Heart left ventricle (tissue), 16 donors: ENCODE measurements at regions of chr7 and their contacts with region 1.

Region 1: GRCh38 chr7:2602406-2603043 is 29.3 kb upstream of the TTYH3 start:
- DNase-seq: no peak
- ATAC-seq: no peak
- H3K4me3 ChIP-seq: no peak overlapping the region
- H3K27ac ChIP-seq: no peak overlapping the region
- H3K4me1 ChIP-seq: peaks cover 3 to 36% (median 18%) of the 10 kb centered on the region in 12 donors
- H3K27me3 ChIP-seq: no peaks in the 10 kb centered on the region
- CTCF ChIP-seq: no peak
- POLR2A ChIP-seq: no peak

Region 2: DNA sequence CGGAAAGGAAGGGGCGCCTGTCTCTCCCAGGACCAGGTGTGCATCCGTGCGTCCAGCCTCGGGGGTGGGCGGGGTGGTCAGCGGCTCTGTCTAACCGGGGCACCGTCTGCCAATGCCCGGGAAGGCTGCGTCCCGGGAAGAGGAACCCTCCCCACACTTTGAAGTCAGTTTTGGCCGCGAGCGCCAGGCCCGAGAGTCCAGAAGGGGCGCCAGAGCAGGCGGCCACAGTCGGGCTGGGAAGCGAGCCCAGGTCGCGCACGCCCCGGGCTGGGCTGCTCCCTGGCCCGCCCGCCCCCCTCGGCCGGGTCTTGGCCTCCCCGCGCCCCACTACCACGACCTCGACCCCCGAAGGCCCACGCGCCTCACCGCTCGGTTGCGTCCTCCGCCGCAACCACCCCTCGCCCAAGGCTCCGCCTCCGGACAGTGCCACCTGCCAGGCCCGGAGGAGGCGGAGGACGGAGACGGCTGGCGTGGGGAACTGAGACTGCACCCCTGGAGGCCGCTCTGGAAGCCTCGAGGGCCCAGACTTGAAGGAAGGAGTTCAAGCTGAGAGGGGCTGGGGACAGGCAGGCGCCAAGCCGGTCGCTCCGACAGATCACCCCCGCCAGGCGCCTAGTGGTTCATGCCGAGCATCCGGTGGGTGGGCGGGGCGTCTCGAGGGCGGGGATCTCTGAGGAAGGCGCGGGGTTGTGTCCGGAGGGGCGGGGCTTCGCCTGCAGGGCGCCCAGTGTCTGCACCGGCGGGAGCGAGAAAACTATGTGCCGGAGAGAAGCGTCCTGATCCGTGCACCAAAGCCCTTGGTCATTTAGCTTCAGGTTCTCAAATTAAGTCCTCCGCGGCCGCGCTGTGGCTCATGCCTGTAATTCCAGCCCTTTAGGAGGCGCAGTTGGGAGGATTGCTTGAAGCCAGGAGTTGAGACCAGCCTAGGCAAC is 47.1 kb before region 1 on chr7 and contains the start of gene BRAT1:
- intact Hi-C with region 1: no loop called
- DNase-seq: peak; percentile 97 to 99 (median 98)
- ATAC-seq: peak; percentile 92 to 96 (median 93)
- H3K4me3 ChIP-seq: peak within 1 kb of the TSS; percentile 66 to 99 (median 88)
- H3K27ac ChIP-seq: peak within 1 kb of the TSS; percentile 94 to 100 (median 99)
- H3K4me1 ChIP-seq: peaks cover 0 to 55% (median 29%) of the 10 kb centered on the region in 12 donors
- H3K27me3 ChIP-seq: no peaks in the 10 kb centered on the region
- CTCF ChIP-seq: peak in 9 of 12 donors; percentile 12 to 67 (median 52)
- POLR2A ChIP-seq: peak in 1 of 2 donors; percentile 71
- total RNA-seq, gene BRAT1: 10.9 to 27.8 (median 14.9) TPM

Region 3: DNA sequence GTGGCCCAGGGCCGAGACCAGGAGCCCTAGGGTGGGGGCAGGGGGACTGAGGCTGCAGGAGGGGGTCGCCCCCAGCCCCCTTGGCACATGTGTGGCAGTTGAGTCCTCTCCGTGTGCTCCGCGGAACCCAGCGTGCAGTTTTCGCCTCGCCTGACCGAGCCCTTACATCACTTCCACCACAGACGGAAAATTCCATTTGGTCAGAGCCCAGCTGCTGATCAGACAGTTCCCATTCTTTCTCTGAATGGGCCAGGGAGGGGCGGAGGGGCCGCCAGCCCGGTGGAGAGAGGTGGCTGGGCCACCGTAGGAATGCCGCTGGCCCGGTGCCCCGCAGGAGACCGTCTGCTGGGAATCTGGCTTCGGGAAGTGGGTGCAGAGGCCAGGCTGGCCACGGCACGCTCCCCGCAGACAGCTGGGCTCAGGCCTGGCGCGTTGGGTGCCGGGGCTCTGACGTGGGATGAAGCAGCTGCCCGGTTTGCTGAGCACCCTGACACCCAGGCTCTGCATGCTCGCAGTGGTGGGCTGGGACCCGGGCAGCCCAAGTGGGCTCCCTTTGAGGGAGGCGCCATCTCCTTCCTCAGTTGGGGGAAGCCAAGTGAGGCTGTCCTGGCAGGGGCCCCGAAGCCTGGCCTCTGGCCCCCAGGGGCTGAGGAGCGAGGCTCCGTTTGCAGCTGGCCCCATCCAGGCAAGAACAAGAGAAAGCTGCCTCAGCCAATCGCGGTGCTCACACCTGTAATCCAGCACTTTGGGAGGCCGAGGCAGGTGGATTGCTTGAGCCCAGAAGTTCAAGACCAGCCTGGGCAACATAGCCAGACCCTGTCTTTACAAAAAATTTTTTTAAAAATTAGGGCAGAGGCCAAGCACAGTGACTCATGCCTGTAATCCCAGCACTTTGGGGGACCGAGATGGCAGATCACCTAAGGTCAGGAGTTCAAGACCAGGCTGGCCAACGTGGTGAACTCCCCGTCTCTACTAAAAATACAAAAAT is 39.2 kb after region 1 on chr7:
- intact Hi-C with region 1: loop called in 4 of 10 experiments (anchors 5 kb)
- DNase-seq: peak; percentile 94 to 97 (median 95)
- ATAC-seq: peak; percentile 73 to 81 (median 79)
- H3K4me3 ChIP-seq: peak overlapping the region in 9 of 12 donors; percentile 23 to 46 (median 34)
- H3K27ac ChIP-seq: peak overlapping the region in 11 of 12 donors; percentile 69 to 87 (median 82)
- H3K4me1 ChIP-seq: peaks cover 18 to 84% (median 71%) of the 10 kb centered on the region in 12 donors
- H3K27me3 ChIP-seq: no peaks in the 10 kb centered on the region
- CTCF ChIP-seq: no peak
- POLR2A ChIP-seq: no peak